ENCODE measurements at regions of chr2 and their contacts with region 1.

Region 1: GRCh38 chr2:96024336-96025193 is 10.2 kb downstream of the GPAT2 start:
- DNase-seq: peak; percentile 64

Region 2: DNA sequence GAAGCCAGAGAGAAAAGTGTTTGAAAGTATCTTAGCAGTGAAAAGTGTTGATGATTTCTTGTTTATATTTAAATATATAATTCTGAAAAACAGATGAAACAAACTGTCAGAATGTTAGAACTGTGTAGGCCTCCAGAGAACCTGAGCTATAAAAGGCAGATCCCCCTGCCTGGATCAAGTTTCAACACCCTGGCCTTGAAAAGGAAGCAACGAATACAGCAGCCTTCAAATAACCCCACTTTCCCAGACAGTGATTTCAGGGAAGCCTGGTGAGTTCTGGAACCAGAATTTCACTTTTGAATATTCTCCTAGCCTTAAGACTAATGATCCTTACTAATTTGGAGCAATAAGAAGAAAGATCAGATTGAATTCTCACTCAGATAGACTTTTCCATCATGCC is 446.0 kb before region 1 on chr2:
- intact Hi-C with region 1: no loop called
- DNase-seq: no peak

Region 3: GRCh38 chr2:96072746-96073145 is 48.2 kb after region 1 on chr2:
- intact Hi-C with region 1: loop called (anchors 10 kb)
- DNase-seq: peak; percentile 71

Region 4: DNA sequence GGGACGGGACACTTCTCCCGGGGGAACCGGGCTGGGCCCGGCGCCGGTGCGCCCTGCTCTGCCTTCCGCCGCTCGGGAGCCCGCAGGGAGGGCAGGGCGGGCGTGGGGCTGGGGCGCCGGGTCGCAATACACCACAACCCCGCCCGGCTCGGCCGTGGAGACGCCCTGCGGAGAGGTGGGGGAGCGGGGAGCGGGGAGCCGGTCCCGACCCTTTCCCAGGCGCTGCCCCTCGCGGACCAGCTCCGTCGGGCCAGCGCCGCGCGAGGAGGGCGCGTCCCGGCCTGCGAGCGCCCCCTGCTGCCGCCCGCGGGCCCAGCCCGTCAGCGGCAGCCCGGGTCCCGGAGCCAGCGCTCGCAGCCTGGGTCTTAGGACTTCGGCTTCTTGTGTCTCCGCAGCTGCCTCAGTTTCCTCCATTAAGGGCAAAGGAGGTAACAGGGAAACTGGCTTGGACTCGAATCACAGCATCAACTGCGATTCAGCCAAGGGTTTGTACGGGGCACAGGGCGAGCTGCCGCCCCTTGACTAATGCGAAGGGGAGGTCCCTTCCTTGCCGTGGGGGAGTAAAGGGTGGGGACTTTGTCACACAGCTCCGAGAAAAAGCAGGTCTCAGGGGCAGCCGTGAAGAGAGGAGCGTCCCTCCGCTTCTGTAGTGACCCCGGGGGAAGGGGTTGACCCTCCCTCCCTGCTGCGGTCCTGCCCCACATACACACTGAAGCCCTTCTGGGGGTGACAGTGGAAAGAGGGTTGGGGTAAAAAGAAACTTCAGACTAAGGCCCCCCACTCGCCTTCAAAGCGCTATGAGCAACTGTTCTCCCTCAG is 92.5 kb after region 1 on chr2:
- intact Hi-C with region 1: loop called (anchors 10 kb)
- DNase-seq: no peak

Region 5: GRCh38 chr2:96856776-96857673 is 832.5 kb after region 1 on chr2:
- intact Hi-C with region 1: no loop called
- DNase-seq: no peak